ENCODE measurements at regions of chr7 and their contacts with region 1.

Region 1: GRCh38 chr7:113796557-113796956 is 122.3 kb downstream of the PPP1R3A start:
- DNase-seq: peak; percentile 98
- H3K4me3 ChIP-seq: peak overlapping the region in 1 of 3 experiments; percentile 13
- H3K27ac ChIP-seq: peak overlapping the region; percentile 91
- H3K4me1 ChIP-seq: peaks cover 28% of the 10 kb centered on the region
- H3K27me3 ChIP-seq: no peaks in the 10 kb centered on the region
- CTCF ChIP-seq: no peak
- POLR2A ChIP-seq: peak; percentile 67

Region 2: DNA sequence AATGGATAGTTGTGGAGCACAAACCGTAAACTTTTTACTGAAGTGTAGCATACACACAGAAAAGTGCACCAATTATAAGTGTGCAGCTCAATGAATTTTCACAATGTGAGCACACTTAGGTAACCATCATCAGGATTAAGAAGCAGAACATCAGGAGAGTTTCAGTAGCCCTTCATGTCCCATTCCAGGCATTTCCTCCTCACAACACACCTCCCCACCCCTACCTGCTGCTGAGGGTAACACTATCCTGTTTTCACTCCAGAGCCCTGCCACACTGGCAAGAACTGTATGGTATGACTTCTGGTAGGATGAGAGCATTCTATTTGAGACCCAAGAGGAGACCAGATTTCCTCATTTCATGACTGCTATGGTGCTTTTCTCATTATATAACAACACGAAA is 44.3 kb before region 1 on chr7:
- CTCF ChIA-PET with region 1: no interaction called
- POLR2A ChIA-PET with region 1: no interaction called
- dilution Hi-C with region 1: no loop called
- intact Hi-C with region 1: loop called (anchors 1 kb)
- DNase-seq: no peak
- H3K4me3 ChIP-seq: no peak overlapping the region
- H3K27ac ChIP-seq: no peak overlapping the region
- H3K4me1 ChIP-seq: no peaks in the 10 kb centered on the region
- H3K27me3 ChIP-seq: no peaks in the 10 kb centered on the region
- CTCF ChIP-seq: no peak
- POLR2A ChIP-seq: no peak

Region 3: DNA sequence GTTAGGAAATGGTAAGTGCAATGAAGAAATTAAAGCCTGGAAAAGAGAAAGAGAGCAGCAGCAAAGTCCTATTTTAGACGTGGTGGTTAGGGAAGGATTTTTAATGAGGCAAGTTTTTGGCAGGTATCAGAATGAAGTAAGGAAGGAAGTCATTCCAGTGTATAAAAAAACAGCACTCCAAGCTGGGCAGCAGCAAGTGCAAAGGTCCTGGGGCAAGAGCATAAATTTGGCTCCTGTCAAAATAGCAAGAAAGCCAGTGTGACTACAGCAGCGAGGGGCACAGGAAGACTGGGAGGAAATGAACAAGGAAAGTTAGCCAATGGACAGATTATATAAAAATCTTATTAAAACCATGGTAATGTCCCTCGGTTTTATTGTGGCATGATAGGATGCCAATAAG is 32.0 kb after region 1 on chr7:
- CTCF ChIA-PET with region 1: interaction called, 3 read pairs
- POLR2A ChIA-PET with region 1: no interaction called
- dilution Hi-C with region 1: no loop called
- intact Hi-C with region 1: loop called (anchors 2 kb)
- DNase-seq: peak; percentile 75
- H3K4me3 ChIP-seq: no peak overlapping the region
- H3K27ac ChIP-seq: no peak overlapping the region
- H3K4me1 ChIP-seq: peaks cover 9% of the 10 kb centered on the region
- H3K27me3 ChIP-seq: no peaks in the 10 kb centered on the region
- CTCF ChIP-seq: no peak
- POLR2A ChIP-seq: no peak

Region 4: GRCh38 chr7:113891828-113892227 is 95.3 kb after region 1 on chr7:
- CTCF ChIA-PET with region 1: interaction called, 3 read pairs
- POLR2A ChIA-PET with region 1: interaction called, 3 read pairs
- dilution Hi-C with region 1: no loop called
- intact Hi-C with region 1: loop called (anchors 1 kb)
- DNase-seq: peak; percentile 74
- H3K4me3 ChIP-seq: no peak overlapping the region
- H3K27ac ChIP-seq: peak overlapping the region; percentile 62
- H3K4me1 ChIP-seq: peaks cover 23% of the 10 kb centered on the region
- H3K27me3 ChIP-seq: no peaks in the 10 kb centered on the region
- CTCF ChIP-seq: no peak
- POLR2A ChIP-seq: no peak

Measured in endothelial cell of umbilical vein (primary cell).